ENCODE measurements at regions of chr15 and their contacts with region 1.

Region 1: GRCh38 chr15:74040109-74040850 is 42.1 kb downstream of the GOLGA6A start:
- DNase-seq: no peak

Region 2: DNA sequence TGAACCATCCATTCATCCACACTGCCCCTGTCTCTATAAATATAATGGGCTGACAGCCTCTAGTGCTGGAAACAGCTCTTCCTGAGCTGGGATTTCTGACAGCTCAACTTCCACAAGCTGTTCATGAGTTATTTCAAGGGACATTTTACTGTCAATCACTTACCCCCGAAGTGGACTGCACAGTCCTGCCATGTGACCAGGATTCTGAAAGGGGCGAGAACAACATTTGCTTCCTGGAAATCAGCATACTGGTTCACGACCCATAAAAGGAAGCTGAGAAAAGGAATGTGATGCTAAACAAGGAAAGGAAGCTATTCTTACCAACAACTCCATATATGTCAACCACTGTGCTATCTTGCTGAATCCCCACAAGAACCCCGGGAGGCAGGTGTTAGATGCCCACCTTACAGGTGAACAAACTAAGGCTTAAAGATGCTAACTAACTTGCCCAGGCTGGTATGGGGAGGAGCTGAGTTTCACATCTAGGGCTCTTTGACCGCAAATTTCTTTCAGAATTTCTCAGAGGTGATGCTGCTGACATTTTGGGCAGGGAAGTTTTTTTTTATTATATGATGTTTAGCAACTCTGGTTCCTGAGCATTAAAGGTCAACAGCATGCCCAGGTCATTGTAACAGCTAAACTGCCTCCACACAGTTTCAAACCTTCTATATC is 613.8 kb before region 1 on chr15:
- intact Hi-C with region 1: no loop called
- DNase-seq: no peak

Region 3: GRCh38 chr15:73856458-73857192 is 183.7 kb before region 1 on chr15:
- intact Hi-C with region 1: no loop called
- DNase-seq: peak in 7 of 42 donors; percentile 5 to 43 (median 28)

Region 4: GRCh38 chr15:73897441-73898261 is 142.6 kb before region 1 on chr15:
- intact Hi-C with region 1: no loop called
- DNase-seq: peak in 24 of 42 donors; percentile 6 to 54 (median 30)

Region 5: DNA sequence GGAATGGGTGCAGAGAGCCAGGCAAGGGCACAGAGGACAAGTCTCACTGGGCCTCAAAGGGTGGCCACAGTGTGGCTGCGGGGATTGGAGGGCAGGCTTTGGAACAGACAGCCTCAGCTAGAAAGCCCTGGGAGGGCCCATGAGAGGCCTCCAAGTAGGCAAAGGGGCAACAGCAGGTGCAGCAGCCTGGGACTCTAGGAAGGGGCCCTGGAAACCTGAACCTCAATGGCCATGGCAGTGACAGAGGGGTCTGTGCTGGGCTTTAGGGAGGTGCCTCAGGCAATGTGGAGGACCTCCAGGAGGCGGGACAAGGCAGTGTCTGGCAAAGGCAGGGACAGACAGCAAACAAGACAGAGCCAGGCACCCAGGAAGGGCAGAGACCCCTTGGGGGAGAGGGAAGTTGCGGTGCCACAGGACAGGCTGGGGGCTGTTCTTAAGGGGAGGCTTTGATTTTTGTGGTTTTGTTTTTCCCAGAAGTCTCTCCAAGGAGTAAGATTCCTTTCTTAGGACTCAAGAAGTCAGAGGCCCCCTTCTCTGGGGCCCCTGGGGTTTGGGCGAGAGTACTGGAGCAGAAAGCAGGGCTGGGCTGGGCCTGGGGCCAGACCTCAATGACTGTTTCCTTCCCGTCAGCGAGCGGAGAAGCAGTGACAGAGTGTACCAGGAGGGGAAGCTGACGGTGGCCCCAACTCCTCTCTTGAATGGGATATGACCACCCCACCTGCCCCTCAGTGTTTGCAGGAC is 57.9 kb before region 1 on chr15:
- intact Hi-C with region 1: loop called (anchors 10 kb)
- DNase-seq: peak in 41 of 42 donors; percentile 25 to 85 (median 65)

Region 6: GRCh38 chr15:74222240-74223119 is 182.2 kb after region 1 on chr15:
- intact Hi-C with region 1: no loop called
- DNase-seq: peak in 1 of 42 donors; percentile 36